ENCODE measurements at regions of chr21 and their contacts with region 1.

Region 1: DNA sequence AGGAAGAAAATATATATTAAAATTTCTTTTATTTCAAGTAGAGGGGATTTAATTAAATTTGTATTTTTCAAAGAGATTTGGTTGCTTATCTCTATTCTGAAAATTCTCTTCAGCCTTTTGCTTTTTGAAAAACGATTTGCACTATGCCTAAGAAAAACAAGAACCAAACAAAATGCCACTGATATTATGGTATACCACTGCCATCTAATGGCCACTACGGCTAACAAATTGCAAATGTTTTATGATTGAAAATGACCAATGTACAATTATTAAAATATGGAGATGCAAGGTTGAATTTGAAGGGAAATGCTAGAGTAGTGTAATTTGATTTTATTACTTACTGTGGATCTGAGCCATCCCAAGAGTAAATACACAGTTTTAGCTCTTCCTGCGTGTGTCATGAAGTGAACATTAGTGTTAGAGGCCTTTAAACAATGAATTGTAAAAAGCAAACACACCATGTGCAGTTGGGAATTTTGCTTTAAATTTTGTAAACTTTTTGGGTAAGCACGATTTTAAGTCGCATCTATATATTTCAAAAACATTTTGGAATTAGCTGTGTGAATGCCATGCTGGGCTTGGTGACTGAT is 137.4 kb upstream of the USP25 start:
- DNase-seq: no peak
- ATAC-seq: no peak
- H3K4me3 ChIP-seq: no peak overlapping the region
- H3K27ac ChIP-seq: no peak overlapping the region
- H3K4me1 ChIP-seq: no peaks in the 10 kb centered on the region
- H3K27me3 ChIP-seq: no peaks in the 10 kb centered on the region

Region 2: DNA sequence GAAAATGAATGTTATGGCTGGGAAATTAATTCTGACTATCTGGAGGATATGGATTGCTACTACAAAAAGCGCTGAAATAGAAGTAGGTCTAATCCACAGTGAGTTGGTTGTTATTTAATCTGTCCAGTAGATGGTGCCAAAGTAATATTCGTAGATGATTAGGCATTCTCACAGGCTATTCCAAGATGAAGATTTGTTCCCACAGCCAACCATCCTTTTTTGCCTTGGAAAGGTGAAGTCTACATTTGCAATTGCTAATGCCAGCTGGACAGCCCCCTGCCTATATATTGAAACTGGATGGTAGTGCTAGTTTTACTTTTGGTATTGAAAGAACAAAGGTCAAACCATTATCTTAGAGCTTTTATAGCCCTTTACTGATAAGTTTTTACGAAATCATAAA is 1332.6 kb before region 1 on chr21:
- intact Hi-C with region 1: loop called in 1 of 4 experiments (anchors 10 kb)
- DNase-seq: no peak
- ATAC-seq: peak; percentile 62 to 80
- H3K4me3 ChIP-seq: no peak overlapping the region
- H3K27ac ChIP-seq: no peak overlapping the region
- H3K4me1 ChIP-seq: no peaks in the 10 kb centered on the region
- H3K27me3 ChIP-seq: no peaks in the 10 kb centered on the region

Region 3: DNA sequence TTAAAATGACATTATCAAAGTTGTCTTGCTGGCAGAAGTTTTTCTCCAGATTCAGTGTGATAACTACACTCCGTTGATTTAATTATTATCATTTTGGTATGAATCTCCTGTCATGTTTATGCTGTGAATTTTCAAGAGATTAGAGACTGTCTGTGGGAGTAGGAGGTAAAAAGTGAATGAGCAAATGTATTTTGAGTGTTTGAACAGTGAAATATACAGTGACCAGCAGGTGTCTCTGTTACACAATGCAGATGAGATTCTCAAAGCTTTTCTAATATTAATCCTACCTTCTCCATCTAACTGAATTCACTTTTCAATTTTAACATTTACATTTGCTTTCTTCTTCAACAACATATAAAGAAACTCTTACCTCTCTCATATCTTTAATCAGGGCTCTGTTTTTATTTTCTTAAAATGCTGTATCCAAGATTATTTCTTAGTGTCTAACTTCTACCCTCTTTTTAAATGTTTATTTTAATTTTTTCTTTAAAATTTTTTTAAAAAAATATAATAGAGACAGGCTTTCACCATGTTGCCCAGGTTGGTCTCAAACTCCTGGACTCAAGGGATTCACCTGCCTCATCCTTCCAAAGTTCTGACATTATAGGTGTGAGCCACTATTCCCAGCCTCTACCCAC is 1188.6 kb before region 1 on chr21:
- intact Hi-C with region 1: loop called in 1 of 4 experiments (anchors 10 kb)
- DNase-seq: no peak
- ATAC-seq: no peak
- H3K4me3 ChIP-seq: no peak overlapping the region
- H3K27ac ChIP-seq: no peak overlapping the region
- H3K4me1 ChIP-seq: no peaks in the 10 kb centered on the region
- H3K27me3 ChIP-seq: no peaks in the 10 kb centered on the region

Region 4: GRCh38 chr21:15495965-15496364 is 96.4 kb before region 1 on chr21:
- intact Hi-C with region 1: no loop called
- DNase-seq: no peak
- ATAC-seq: no peak
- H3K4me3 ChIP-seq: no peak overlapping the region
- H3K27ac ChIP-seq: no peak overlapping the region
- H3K4me1 ChIP-seq: no peaks in the 10 kb centered on the region
- H3K27me3 ChIP-seq: no peaks in the 10 kb centered on the region

Measured in right cardiac atrium (tissue), 5 donors.